ENCODE measurements at regions of chr15 and their contacts with region 1.

Region 1: DNA sequence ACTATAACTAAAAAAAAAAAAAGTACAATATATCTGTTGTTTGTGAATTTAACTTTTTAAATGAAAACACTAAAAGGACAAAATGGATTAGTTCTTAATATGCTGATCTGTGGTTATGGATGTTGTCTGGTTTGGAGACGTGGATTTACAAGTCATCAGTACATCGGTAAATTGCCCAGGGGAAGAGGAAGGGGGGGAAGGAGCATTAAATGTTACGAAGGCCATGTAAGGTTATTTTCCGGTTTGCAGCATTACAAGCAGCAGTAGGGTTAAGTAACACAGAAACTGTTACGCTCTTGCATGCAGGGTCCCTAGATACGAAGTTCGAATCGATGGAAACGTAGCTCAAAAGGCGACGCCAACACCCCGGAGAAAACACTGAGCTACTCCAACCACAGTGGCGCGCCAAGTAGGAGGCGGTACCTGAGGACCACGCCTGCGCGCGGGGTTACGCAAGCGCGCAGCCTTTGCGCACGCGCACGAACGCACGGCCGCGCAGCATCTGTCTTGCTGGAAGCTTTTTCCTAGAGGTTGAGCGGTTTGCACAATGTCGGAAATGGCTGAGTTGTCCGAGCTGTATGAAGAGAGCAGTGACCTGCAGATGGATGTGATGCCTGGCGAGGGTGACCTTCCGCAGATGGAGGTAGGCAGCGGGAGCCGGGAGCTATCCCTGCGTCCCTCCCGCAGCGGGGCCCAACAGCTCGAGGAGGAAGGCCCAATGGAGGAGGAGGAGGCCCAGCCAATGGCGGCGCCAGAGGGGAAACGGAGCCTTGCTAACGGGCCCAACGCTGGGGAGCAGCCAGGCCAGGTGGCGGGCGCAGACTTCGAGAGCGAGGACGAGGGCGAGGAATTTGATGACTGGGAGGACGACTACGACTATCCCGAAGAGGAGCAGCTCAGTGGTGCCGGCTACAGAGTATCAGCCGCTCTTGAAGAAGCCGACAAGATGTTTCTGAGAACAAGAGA is at the start of gene EID1:
- DNase-seq: peak; percentile 90
- ATAC-seq: peak; percentile 95
- H3K4me3 Mint-ChIP-seq: peak within 1 kb of the TSS; percentile 99
- H3K27ac Mint-ChIP-seq: peak within 1 kb of the TSS; percentile 97
- H3K4me1 Mint-ChIP-seq: peaks cover 27% of the 10 kb centered on the region
- H3K27me3 Mint-ChIP-seq: peaks cover 3% of the 10 kb centered on the region
- CTCF ChIP-seq: no peak
- total RNA-seq, gene EID1: 51.3 and 54.4 TPM in 2 replicates

Region 2: GRCh38 chr15:48177766-48178647 is 699.9 kb before region 1 on chr15 and contains the start of gene MYEF2:
- CTCF ChIA-PET with region 1: no interaction called
- POLR2A ChIA-PET with region 1: no interaction called
- intact Hi-C with region 1: loop called (anchors 10 kb)
- DNase-seq: peak; percentile 55
- ATAC-seq: peak; percentile 84
- H3K4me3 Mint-ChIP-seq: peak within 1 kb of the TSS; percentile 94
- H3K27ac Mint-ChIP-seq: peak within 1 kb of the TSS; percentile 90
- H3K4me1 Mint-ChIP-seq: peaks cover 18% of the 10 kb centered on the region
- H3K27me3 Mint-ChIP-seq: peaks cover 13% of the 10 kb centered on the region
- CTCF ChIP-seq: no peak
- total RNA-seq, gene MYEF2: 19.7 and 23.1 TPM in 2 replicates

Region 3: GRCh38 chr15:49101536-49101935 is 223.6 kb after region 1 on chr15:
- CTCF ChIA-PET with region 1: no interaction called
- POLR2A ChIA-PET with region 1: no interaction called
- intact Hi-C with region 1: no loop called
- DNase-seq: no peak
- ATAC-seq: no peak
- H3K4me3 Mint-ChIP-seq: no peak overlapping the region
- H3K27ac Mint-ChIP-seq: no peak overlapping the region
- H3K4me1 Mint-ChIP-seq: no peaks in the 10 kb centered on the region
- H3K27me3 Mint-ChIP-seq: no peaks in the 10 kb centered on the region
- CTCF ChIP-seq: no peak

Measured in activated B cell treated with CpG ODN at 0.5 μM for 24 hours (primary cell).